K562 (cell line): ENCODE measurements at regions of chr5 and their contacts with region 1.

Region 1: DNA sequence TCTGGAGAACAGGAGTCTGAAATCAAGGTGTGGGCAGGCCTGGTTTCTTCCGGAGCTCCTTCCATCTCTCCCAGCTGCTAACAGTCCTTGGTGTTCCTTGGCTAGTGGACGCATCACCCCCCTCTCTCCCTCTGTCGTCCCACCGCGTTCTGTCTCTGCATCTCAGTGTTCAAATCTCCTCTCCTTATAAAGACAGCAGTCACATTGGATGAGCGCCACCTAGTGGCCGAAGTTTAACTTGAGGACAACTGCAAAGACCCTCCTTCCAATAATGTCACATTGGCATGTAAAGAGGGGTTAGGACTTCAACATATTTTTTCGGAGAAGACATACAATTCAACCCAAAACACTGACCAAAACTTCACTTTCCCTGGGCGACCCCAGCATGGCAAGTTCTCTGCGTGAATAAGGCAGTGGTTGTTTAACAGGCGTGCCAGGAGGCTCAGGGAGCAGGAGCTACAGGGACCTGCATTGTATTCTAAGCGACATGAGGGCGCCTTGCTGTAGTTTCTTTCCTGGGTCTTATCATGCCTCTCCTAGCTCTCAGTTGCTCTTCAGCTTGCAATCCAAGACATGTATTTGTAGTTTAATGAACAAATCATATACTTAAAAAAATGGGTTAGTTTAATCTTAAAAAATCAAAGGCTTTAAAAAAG is 27.9 kb upstream of the BASP1 start:
- DNase-seq: peak; percentile 54 to 83 (median 67)
- ATAC-seq: peak; percentile 94
- H3K4me3 ChIP-seq: no peak overlapping the region
- H3K27ac ChIP-seq: no peak overlapping the region
- H3K4me1 ChIP-seq: no peaks in the 10 kb centered on the region
- H3K27me3 ChIP-seq: 0 out of 5 replicates have a peak, but pooled peaks cover 0 to 5% of the 10 kb centered on the region in 2 experiments
- CTCF ChIP-seq: peak; percentile 72 to 84 (median 77)
- EP300 ChIP-seq: no peak
- POLR2A ChIP-seq: no peak
- RAD21 ChIP-seq: peak; percentile 56 to 76

Region 2: DNA sequence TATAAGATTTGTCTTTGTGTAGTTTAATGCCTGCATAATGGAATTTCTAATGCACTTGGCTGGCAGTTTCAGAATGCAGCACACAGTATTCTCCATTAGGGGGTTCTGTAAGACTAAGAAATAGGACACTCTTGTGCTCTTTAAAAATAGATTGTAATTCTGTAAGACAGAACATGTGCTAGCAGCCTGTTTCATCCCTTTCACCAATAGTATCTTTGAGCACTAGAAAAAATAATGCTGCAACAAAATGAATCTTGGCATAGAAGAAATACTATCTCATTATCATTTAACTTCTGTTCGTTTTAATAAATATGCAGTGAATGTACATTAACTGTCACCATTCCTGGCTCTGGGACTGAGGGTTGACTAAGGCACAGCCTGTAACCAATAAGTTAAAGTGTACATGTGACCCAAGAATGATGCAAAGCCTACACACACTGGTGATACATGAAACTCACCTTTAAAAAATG is 700.2 kb before region 1 on chr5:
- CTCF ChIA-PET with region 1: interaction called, 5 read pairs
- POLR2A ChIA-PET with region 1: no interaction called
- in situ Hi-C with region 1: no loop called
- intact Hi-C with region 1: loop called (anchors 5 kb)
- DNase-seq: peak in 2 of 4 experiments; percentile 28 to 42
- ATAC-seq: peak; percentile 92
- H3K4me3 ChIP-seq: no peak overlapping the region
- H3K27ac ChIP-seq: no peak overlapping the region
- H3K4me1 ChIP-seq: no peaks in the 10 kb centered on the region
- H3K27me3 ChIP-seq: peaks cover 10 to 18% of the 10 kb centered on the region in 2 experiments; a peak in 4 of 5 replicates
- CTCF ChIP-seq: peak; percentile 48 to 73 (median 49); a peak in 4 of 6 replicates
- EP300 ChIP-seq: no peak
- POLR2A ChIP-seq: no peak
- RAD21 ChIP-seq: peak; percentile 93 to 95

Region 3: GRCh38 chr5:16784843-16785791 is 404.4 kb before region 1 on chr5:
- CTCF ChIA-PET with region 1: interaction called, 45 read pairs
- POLR2A ChIA-PET with region 1: no interaction called
- in situ Hi-C with region 1: loop called (anchors 5 kb)
- intact Hi-C with region 1: no loop called
- DNase-seq: no peak
- ATAC-seq: no peak
- H3K4me3 ChIP-seq: no peak overlapping the region
- H3K27ac ChIP-seq: no peak overlapping the region
- H3K4me1 ChIP-seq: no peaks in the 10 kb centered on the region
- H3K27me3 ChIP-seq: peaks cover 15 to 22% of the 10 kb centered on the region in 2 experiments; a peak in 3 of 5 replicates
- CTCF ChIP-seq: no peak
- EP300 ChIP-seq: no peak
- POLR2A ChIP-seq: no peak
- RAD21 ChIP-seq: no peak

Region 4: GRCh38 chr5:16791036-16791705 is 398.3 kb before region 1 on chr5:
- CTCF ChIA-PET with region 1: interaction called, 45 read pairs
- POLR2A ChIA-PET with region 1: no interaction called
- in situ Hi-C with region 1: loop called (anchors 5 kb)
- intact Hi-C with region 1: loop called (anchors 1 kb)
- DNase-seq: peak; percentile 55 to 66 (median 64)
- ATAC-seq: peak; percentile 75
- H3K4me3 ChIP-seq: no peak overlapping the region
- H3K27ac ChIP-seq: no peak overlapping the region
- H3K4me1 ChIP-seq: no peaks in the 10 kb centered on the region
- H3K27me3 ChIP-seq: peaks cover 0 to 12% of the 10 kb centered on the region in 2 experiments; a peak in 2 of 5 replicates
- CTCF ChIP-seq: peak; percentile 54 to 80 (median 62); a peak in 5 of 6 replicates
- EP300 ChIP-seq: no peak
- POLR2A ChIP-seq: no peak
- RAD21 ChIP-seq: peak; percentile 74 to 82

Region 5: GRCh38 chr5:16894236-16895057 is 295.1 kb before region 1 on chr5:
- CTCF ChIA-PET with region 1: no interaction called
- POLR2A ChIA-PET with region 1: no interaction called
- in situ Hi-C with region 1: no loop called
- intact Hi-C with region 1: no loop called
- DNase-seq: peak in 1 of 4 experiments; percentile 16
- ATAC-seq: peak; percentile 68
- H3K4me3 ChIP-seq: no peak overlapping the region
- H3K27ac ChIP-seq: no peak overlapping the region
- H3K4me1 ChIP-seq: peaks cover 0 to 7% of the 10 kb centered on the region in 2 experiments; a peak in 2 of 5 replicates
- H3K27me3 ChIP-seq: peaks cover 4 to 15% of the 10 kb centered on the region in 2 experiments; a peak in 3 of 5 replicates
- CTCF ChIP-seq: no peak
- EP300 ChIP-seq: no peak
- POLR2A ChIP-seq: no peak
- RAD21 ChIP-seq: no peak

Region 6: DNA sequence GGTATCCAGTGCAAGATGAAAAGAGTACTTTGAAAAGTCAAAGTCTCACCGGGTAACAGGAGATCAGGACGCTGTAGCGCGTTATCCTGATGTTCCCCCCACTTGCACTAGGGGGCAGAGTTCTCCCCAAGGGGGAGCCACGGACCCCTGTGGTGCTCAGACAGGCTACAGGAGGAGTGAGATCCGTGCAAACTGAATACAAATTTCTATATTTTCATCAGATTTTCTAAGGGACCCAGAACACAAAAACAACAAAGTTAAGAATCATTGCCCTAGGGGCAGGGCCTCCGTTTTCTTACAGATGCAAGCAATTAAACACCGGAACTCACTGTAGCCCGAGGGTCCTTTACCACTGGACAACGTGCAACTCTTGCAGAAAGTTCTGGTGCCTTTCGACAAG is 255.4 kb before region 1 on chr5:
- CTCF ChIA-PET with region 1: no interaction called
- POLR2A ChIA-PET with region 1: no interaction called
- in situ Hi-C with region 1: no loop called
- intact Hi-C with region 1: loop called (anchors 5 kb)
- DNase-seq: peak; percentile 53 to 80 (median 70)
- ATAC-seq: peak; percentile 88
- H3K4me3 ChIP-seq: no peak overlapping the region
- H3K27ac ChIP-seq: no peak overlapping the region
- H3K4me1 ChIP-seq: peaks cover 0 to 13% of the 10 kb centered on the region in 2 experiments; a peak in 2 of 5 replicates
- H3K27me3 ChIP-seq: peaks cover 6 to 13% of the 10 kb centered on the region in 2 experiments; a peak in 2 of 5 replicates
- CTCF ChIP-seq: peak; percentile 61 to 76 (median 76)
- EP300 ChIP-seq: no peak
- POLR2A ChIP-seq: no peak
- RAD21 ChIP-seq: peak; percentile 29 to 41; a peak in 2 of 4 replicates

Region 7: DNA sequence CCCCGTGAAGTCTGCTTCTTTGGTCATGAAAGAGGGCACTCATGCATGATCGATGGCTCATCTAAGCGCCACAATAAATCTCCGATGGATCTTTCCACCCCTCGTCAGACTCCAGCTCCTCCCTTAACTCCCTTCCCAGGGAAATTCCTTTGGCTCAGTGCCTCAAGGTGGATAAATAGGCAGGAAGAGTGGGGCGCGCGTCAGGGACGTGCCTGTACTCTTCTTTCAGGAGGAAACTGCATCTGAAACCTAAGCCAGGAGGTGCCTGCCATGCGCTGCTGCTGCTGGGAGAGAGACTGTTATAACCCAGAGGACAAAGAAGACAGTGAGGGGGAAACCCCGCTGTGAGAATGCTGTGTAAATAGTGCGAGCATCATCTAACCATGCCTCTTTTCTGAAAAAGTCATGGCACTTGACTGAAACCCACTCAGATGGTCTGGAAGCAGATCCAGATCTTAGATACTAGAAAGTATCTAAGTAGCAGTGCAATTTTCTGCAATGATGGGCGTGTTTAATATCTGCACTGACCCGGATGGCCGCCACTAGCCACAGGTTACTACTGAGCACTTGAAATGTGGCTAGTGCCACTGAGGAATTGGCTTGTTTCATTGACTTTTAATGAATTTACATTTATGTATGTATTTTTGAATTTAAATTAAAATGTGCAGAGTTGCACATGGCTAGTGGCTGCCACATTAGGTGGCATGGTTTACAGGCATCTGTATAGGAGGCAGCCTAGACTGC is 92.4 kb before region 1 on chr5:
- CTCF ChIA-PET with region 1: no interaction called
- POLR2A ChIA-PET with region 1: no interaction called
- in situ Hi-C with region 1: no loop called
- intact Hi-C with region 1: no loop called
- DNase-seq: no peak
- ATAC-seq: no peak
- H3K4me3 ChIP-seq: no peak overlapping the region
- H3K27ac ChIP-seq: no peak overlapping the region
- H3K4me1 ChIP-seq: no peaks in the 10 kb centered on the region
- H3K27me3 ChIP-seq: peaks cover 5 to 7% of the 10 kb centered on the region in 2 experiments; a peak in 3 of 5 replicates
- CTCF ChIP-seq: no peak
- EP300 ChIP-seq: no peak
- POLR2A ChIP-seq: no peak
- RAD21 ChIP-seq: no peak